Activated CD4-positive, alpha-beta T cell treated with anti-CD3 and anti-CD28 coated beads, Interleukin-2, amount 10 ng/mL, durations not matched to agents 7 days and 5 days (primary cell): ENCODE measurements at regions of chr5 and their contacts with region 1.

Region 1: GRCh38 chr5:141960449-141961202 is 2.6 kb upstream of the PCDH12 start:
- DNase-seq: peak; percentile 95
- H3K4me3 Mint-ChIP-seq: peak overlapping the region; percentile 46
- H3K27ac Mint-ChIP-seq: peak overlapping the region; percentile 95
- H3K4me1 Mint-ChIP-seq: peaks cover 53% of the 10 kb centered on the region
- H3K27me3 Mint-ChIP-seq: no peaks in the 10 kb centered on the region

Region 2: DNA sequence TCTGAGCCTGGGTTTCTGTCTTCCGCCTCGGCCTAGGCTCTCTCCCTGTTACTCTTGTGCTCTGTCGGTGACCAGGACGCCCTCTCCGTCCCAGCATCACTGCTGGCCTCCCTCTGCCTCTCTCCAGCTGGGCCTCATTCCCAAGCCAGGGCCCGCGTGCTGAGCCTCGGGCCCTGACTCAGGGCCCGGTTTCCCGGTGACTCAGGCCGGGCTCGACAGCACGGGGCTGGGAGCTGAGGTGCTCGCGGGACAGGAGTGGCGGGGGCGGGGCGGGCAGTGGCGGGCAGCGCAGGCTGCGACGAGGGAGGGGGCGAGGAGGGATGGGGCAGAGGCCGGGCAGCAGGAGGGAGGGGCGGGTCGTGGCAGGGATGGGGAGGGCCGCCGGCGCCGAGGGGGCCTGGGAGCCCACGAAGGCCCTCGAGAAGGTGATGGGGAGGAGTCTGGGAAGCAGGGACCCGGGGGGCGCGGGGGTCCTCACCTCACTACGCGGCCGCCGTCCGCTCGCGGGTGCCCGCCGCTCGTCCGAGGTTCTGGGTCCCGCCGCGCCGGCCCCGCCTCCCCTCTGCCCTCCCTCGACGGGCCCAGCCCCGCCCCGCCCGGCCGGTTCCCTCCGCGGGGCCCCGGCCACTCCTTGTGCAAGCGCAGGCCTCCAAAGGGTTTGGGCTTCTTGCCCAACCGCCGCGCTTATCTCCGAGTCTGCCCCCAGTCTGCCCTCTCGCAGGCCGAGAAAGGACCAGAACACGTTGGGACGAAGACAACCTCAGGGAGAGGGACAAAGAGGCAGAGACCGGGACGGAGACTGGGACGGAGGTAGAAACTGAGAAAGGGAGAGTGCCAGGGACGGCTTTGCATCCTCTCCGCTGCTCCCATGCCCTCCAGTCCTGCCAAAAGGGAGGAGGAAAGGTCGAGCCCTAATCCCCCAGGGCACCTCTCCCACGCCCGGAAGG is 278.7 kb before region 1 on chr5 and contains the start of gene ARAP3:
- CTCF ChIA-PET with region 1: interaction called, 18 read pairs
- POLR2A ChIA-PET with region 1: interaction called, 3 read pairs
- DNase-seq: peak; percentile 26
- H3K4me3 Mint-ChIP-seq: peak within 1 kb of the TSS; percentile 59
- H3K27ac Mint-ChIP-seq: peak within 1 kb of the TSS; percentile 88
- H3K4me1 Mint-ChIP-seq: peaks cover 35% of the 10 kb centered on the region
- H3K27me3 Mint-ChIP-seq: peaks cover 3% of the 10 kb centered on the region
- total RNA-seq, gene ARAP3: 4.2 to 4.6 TPM

Region 3: GRCh38 chr5:141701360-141702119 is 259.1 kb before region 1 on chr5:
- CTCF ChIA-PET with region 1: interaction called, 90 read pairs
- POLR2A ChIA-PET with region 1: no interaction called
- DNase-seq: no peak
- H3K4me3 Mint-ChIP-seq: peak overlapping the region; percentile 71
- H3K27ac Mint-ChIP-seq: no peak overlapping the region
- H3K4me1 Mint-ChIP-seq: peaks cover 23% of the 10 kb centered on the region
- H3K27me3 Mint-ChIP-seq: peaks cover 48% of the 10 kb centered on the region

Region 4: GRCh38 chr5:141923448-141924352 is 36.9 kb before region 1 on chr5 and contains the start of gene DELE1:
- CTCF ChIA-PET with region 1: interaction called, 10 read pairs
- POLR2A ChIA-PET with region 1: no interaction called
- DNase-seq: peak; percentile 94
- H3K4me3 Mint-ChIP-seq: peak within 1 kb of the TSS; percentile 87
- H3K27ac Mint-ChIP-seq: peak within 1 kb of the TSS; percentile 88
- H3K4me1 Mint-ChIP-seq: peaks cover 35% of the 10 kb centered on the region
- H3K27me3 Mint-ChIP-seq: no peaks in the 10 kb centered on the region
- total RNA-seq, gene DELE1: 71.5 to 72.1 TPM

Region 5: GRCh38 chr5:141976176-141976575 is 15.6 kb after region 1 on chr5:
- CTCF ChIA-PET with region 1: interaction called, 107 read pairs
- POLR2A ChIA-PET with region 1: no interaction called
- DNase-seq: no peak
- H3K4me3 Mint-ChIP-seq: no peak overlapping the region
- H3K27ac Mint-ChIP-seq: no peak overlapping the region
- H3K4me1 Mint-ChIP-seq: peaks cover 21% of the 10 kb centered on the region
- H3K27me3 Mint-ChIP-seq: no peaks in the 10 kb centered on the region